ENCODE measurements at regions of chr15 and their contacts with region 1.

Region 1: DNA sequence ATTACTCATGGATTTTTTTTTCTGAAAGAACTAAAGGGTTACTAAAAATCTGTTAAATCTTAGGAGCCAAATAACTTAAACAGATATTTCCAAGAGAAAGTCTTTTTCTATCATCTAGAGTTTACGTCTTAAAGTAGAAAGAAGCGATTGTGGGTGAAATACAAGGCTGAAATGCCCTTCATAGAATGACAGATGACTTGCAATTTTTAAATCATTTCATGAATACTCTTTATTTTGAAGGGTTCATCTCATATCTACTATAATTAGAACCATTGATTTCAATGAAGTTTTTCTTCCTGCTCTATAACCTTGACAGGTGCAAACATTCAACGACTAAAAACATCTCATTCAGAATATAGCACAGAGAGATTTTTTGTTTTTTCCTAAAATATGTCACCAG is 217.0 kb downstream of the GABRB3 start:
- DNase-seq: no peak
- H3K4me3 ChIP-seq: no peak overlapping the region
- H3K27ac ChIP-seq: no peak overlapping the region
- H3K4me1 ChIP-seq: no peaks in the 10 kb centered on the region
- H3K27me3 ChIP-seq: no peaks in the 10 kb centered on the region
- CTCF ChIP-seq: no peak
- POLR2A ChIP-seq: no peak

Region 2: GRCh38 chr15:26595611-26596010 is 39.7 kb after region 1 on chr15:
- intact Hi-C with region 1: loop called (anchors 2 kb)
- DNase-seq: no peak
- H3K4me3 ChIP-seq: no peak overlapping the region
- H3K27ac ChIP-seq: no peak overlapping the region
- H3K4me1 ChIP-seq: no peaks in the 10 kb centered on the region
- H3K27me3 ChIP-seq: no peaks in the 10 kb centered on the region
- CTCF ChIP-seq: no peak
- POLR2A ChIP-seq: no peak

Region 3: DNA sequence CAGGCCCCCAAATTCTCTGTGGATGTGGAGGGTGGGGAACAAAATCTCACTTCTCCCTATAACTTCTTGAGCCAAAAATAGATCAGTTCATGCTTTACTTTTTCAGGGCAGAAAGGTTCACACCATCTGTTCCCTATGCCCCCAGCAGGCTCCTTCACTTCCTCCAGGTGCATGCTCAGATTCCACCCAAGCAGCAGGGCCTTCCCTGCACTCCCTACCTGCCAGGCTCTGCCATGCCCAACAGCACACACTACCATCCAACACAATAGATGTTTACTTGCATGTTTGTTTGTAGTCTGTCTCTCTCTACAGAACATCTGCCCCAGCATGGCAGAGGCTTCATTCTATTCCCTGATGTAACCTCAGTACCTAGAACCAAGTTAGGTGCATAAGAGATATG is 173.7 kb after region 1 on chr15:
- intact Hi-C with region 1: no loop called
- DNase-seq: no peak
- H3K4me3 ChIP-seq: no peak overlapping the region
- H3K27ac ChIP-seq: no peak overlapping the region
- H3K4me1 ChIP-seq: no peaks in the 10 kb centered on the region
- H3K27me3 ChIP-seq: no peaks in the 10 kb centered on the region
- CTCF ChIP-seq: no peak
- POLR2A ChIP-seq: no peak

Region 4: DNA sequence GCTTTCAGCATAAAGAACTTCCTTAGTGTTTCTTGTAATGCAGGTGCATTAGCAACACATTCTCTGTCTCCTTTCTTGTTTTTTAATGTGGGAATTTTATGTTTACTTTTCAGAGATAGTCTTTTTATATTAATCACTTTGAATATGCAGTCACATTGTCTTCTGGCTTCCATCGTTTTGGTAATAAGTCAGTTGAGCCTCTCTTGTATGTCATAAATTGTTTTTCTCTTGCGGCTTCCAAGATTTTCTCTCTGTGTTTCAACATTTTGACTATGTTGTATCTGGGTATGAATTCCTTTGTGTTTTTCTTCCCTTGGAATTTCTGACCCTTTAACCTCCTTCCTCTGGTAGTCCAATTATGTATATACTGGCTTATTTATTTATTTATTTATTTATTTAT is 440.4 kb after region 1 on chr15:
- intact Hi-C with region 1: no loop called
- DNase-seq: no peak
- H3K4me3 ChIP-seq: no peak overlapping the region
- H3K27ac ChIP-seq: no peak overlapping the region
- H3K4me1 ChIP-seq: no peaks in the 10 kb centered on the region
- H3K27me3 ChIP-seq: no peaks in the 10 kb centered on the region
- CTCF ChIP-seq: no peak
- POLR2A ChIP-seq: no peak

Region 5: DNA sequence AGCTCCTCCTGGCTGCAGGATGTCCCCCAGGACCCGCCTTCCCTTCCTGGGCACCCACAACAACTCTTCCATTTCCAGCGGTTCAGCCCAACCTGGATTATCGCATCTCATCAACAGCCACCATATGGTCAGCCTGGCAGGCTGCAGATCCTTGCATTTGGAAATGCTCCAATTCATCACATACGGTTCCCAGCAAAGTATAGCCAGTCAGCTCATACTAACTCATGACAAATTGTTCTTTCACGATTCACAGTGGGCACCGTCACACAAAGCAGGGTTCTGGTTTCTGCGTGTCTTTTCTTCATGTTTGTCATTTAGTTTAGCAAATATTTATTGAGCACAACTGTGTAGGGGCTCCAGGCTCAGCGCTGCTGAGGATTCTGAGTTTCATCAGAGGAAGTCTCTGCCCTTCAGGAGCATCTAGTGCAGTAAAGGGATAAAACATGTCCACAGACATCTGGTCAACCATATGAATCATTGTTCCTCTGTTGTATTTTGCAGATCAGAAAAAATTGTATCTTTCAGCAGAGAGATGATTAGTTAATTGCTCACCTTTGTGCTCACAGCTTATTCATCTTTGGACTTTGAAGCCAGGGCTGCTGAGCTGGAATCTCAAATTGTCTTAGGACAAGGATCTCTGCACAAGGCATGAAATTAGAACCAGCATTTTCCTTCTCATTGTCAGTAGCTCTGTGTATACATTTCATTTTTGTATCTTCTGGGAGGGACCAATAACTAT is 540.2 kb after region 1 on chr15:
- intact Hi-C with region 1: no loop called
- DNase-seq: no peak
- H3K4me3 ChIP-seq: no peak overlapping the region
- H3K27ac ChIP-seq: no peak overlapping the region
- H3K4me1 ChIP-seq: no peaks in the 10 kb centered on the region
- H3K27me3 ChIP-seq: no peaks in the 10 kb centered on the region
- CTCF ChIP-seq: no peak
- POLR2A ChIP-seq: no peak

Measured in vagina (tissue), 2 donors.